Left lung (tissue), 14 donors: ENCODE measurements at regions of chr17 and their contacts with region 1.

Region 1: GRCh38 chr17:64968652-64969501 is 49.6 kb upstream of the LRRC37A3 start:
- DNase-seq: no peak
- ATAC-seq: no peak
- H3K4me3 ChIP-seq: no peak overlapping the region
- H3K27ac ChIP-seq: no peak overlapping the region
- H3K4me1 ChIP-seq: peaks cover 0 to 21% of the 10 kb centered on the region in 2 donors
- H3K27me3 ChIP-seq: no peaks in the 10 kb centered on the region
- CTCF ChIP-seq: no peak

Region 2: GRCh38 chr17:65029605-65030336 is 60.9 kb after region 1 on chr17:
- intact Hi-C with region 1: no loop called
- DNase-seq: no peak
- ATAC-seq: peak; percentile 30
- H3K4me3 ChIP-seq: no peak overlapping the region
- H3K27ac ChIP-seq: peak overlapping the region; percentile 5 to 66
- H3K4me1 ChIP-seq: peaks cover 8 to 83% of the 10 kb centered on the region in 2 donors
- H3K27me3 ChIP-seq: no peaks in the 10 kb centered on the region
- CTCF ChIP-seq: no peak

Region 3: GRCh38 chr17:65100316-65101140 is 131.7 kb after region 1 on chr17:
- intact Hi-C with region 1: loop called in 1 of 2 experiments (anchors 10 kb)
- DNase-seq: peak; percentile 82 to 97 (median 90)
- ATAC-seq: peak; percentile 98
- H3K4me3 ChIP-seq: peak overlapping the region; percentile 29 to 45
- H3K27ac ChIP-seq: peak overlapping the region; percentile 34 to 60
- H3K4me1 ChIP-seq: peaks cover 0 to 14% of the 10 kb centered on the region in 2 donors
- H3K27me3 ChIP-seq: no peaks in the 10 kb centered on the region
- CTCF ChIP-seq: peak; percentile 80 to 97